ENCODE measurements at regions of chr3 and their contacts with region 1.

Region 1: GRCh38 chr3:30779686-30780287 is 114.7 kb downstream of the GADL1 start:
- DNase-seq: no peak
- ATAC-seq: no peak
- H3K4me3 ChIP-seq: no peak overlapping the region
- H3K27ac ChIP-seq: no peak overlapping the region
- H3K4me1 ChIP-seq: no peaks in the 10 kb centered on the region
- H3K27me3 ChIP-seq: no peaks in the 10 kb centered on the region
- CTCF ChIP-seq: peak in 8 of 9 donors; percentile 16 to 56 (median 44)

Region 2: GRCh38 chr3:30886888-30887287 is 107.1 kb after region 1 on chr3:
- intact Hi-C with region 1: loop called in 1 of 10 experiments (anchors 10 kb)
- DNase-seq: no peak
- ATAC-seq: no peak
- H3K4me3 ChIP-seq: no peak overlapping the region
- H3K27ac ChIP-seq: no peak overlapping the region
- H3K4me1 ChIP-seq: no peaks in the 10 kb centered on the region
- H3K27me3 ChIP-seq: peaks cover 0 to 10% (median 0%) of the 10 kb centered on the region in 7 donors
- CTCF ChIP-seq: no peak

Region 3: DNA sequence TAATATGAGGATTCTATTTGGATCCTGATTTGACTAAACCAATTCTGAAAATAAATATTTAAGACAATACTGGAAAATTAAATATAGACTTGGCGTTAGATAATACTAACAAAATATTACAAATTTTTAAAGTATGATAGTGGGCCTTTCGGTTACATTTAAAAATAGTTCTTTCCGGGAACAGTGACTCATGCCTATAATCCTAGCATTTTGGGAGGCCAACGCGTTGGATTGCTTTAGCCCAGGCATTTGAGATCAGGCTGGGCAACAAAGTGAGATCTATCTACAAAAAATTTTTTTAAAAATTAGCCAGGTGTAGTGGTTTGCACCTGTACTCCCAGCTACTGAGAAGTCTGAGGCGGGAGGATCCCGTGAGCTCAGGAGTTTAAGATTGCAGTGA is 145.0 kb after region 1 on chr3:
- intact Hi-C with region 1: loop called in 1 of 10 experiments (anchors 5 kb)
- DNase-seq: no peak
- ATAC-seq: no peak
- H3K4me3 ChIP-seq: no peak overlapping the region
- H3K27ac ChIP-seq: no peak overlapping the region
- H3K4me1 ChIP-seq: no peaks in the 10 kb centered on the region
- H3K27me3 ChIP-seq: no peaks in the 10 kb centered on the region
- CTCF ChIP-seq: no peak

Region 4: DNA sequence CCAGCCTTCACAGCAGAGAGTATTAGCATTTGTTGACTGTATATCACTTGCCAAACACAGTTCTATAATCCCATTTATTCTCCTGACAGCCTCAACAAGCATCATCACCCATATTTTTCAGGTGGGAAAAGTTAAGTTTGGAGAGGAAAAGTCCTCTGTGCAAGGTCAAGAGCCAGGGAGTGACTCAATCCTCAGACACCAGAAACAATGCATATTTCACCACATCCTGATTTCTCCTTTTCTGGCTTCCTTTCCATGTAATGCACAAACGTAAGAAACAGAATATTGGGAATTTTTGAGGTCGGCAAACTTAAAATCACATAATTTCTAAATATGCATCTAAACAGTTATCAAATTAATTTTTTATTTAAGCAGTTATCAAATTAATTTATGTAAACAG is 230.7 kb after region 1 on chr3:
- intact Hi-C with region 1: loop called in 4 of 10 experiments (anchors 5 to 10 kb)
- DNase-seq: no peak
- ATAC-seq: no peak
- H3K4me3 ChIP-seq: no peak overlapping the region
- H3K27ac ChIP-seq: no peak overlapping the region
- H3K4me1 ChIP-seq: peaks cover 0 to 16% (median 0%) of the 10 kb centered on the region in 9 donors
- H3K27me3 ChIP-seq: no peaks in the 10 kb centered on the region
- CTCF ChIP-seq: no peak

Region 5: DNA sequence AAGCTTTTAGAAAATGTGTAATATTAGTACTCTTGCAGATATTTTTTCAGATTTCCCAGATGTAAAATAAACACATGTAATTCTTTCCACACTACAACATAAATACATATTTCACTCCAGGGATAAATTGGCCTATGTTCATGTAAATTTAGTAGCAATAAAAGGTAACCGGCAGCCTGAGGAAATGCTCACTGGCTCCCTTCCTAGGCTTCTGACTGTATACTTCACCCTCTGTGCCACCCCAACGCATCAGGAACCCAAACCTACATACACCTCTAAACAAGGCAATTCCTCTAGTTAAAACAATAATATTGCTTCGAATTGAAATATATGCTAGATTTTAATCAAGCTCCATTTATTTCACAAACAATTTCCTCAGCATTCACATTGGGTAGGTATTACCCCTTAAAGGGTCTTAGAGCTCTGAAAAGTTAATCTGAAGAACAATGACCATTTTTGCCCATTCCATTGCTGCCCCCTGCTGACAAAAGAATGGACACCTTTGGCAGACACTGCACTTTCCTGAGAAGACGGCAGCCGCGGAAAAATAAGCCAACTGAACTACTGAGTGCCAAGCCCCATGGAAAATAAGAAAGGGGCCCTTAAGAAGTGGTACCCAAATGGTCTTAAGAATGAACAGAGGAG is 988.8 kb after region 1 on chr3:
- intact Hi-C with region 1: loop called in 2 of 10 experiments (anchors 10 kb)
- DNase-seq: peak in 1 of 2 donors; percentile 70
- ATAC-seq: peak in 7 of 8 donors; percentile 57 to 76 (median 68)
- H3K4me3 ChIP-seq: no peak overlapping the region
- H3K27ac ChIP-seq: no peak overlapping the region
- H3K4me1 ChIP-seq: peaks cover 0 to 6% (median 0%) of the 10 kb centered on the region in 9 donors
- H3K27me3 ChIP-seq: no peaks in the 10 kb centered on the region
- CTCF ChIP-seq: peak; percentile 50 to 81 (median 77)

Measured in heart right ventricle (tissue), 16 donors.